ENCODE measurements at regions of chr7 and their contacts with region 1.

Region 1: GRCh38 chr7:158976849-158977593 is 120.7 kb downstream of the DYNC2I1 start:
- DNase-seq: peak; percentile 85
- H3K4me3 Mint-ChIP-seq: peak overlapping the region; percentile 60
- H3K27ac Mint-ChIP-seq: peak overlapping the region; percentile 44
- H3K4me1 Mint-ChIP-seq: peaks cover 7% of the 10 kb centered on the region
- H3K27me3 Mint-ChIP-seq: no peaks in the 10 kb centered on the region
- CTCF ChIP-seq: peak; percentile 92

Region 2: DNA sequence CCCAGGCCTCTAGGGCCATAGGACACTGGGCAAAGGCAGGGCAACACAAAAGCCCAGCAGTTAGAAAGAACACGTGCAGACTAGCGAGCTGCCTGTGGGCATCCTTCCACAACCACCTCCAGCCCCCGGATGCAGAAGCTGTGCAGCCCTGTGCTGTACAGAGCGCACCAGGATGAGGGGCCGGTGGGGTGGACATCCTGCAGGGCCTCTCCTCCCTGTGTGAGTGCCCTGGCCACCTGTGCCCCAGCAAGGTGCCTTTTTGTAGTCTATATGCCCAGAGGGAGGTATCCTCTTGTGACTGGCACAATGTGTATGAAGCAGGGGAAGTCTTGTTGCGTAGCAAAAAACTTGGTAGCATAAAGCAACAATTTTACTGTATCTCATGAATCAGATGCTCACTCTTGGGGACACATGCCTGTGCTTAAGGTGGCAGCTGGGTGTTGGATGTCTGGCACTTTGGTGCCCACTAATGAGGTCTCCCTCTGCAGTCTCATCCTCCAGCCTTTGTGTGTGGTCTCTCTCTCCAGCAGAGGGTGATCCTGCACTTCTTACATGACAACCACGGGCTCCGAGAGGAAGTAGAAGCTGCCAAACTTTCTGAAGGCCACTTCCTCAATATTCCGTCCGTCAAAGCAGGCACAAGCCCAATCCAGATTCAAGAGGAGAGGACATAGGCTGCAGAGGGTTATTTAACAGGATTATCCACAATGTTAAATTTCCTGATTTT is 281.1 kb before region 1 on chr7:
- CTCF ChIA-PET with region 1: interaction called, 5 read pairs
- POLR2A ChIA-PET with region 1: no interaction called
- intact Hi-C with region 1: loop called (anchors 1 kb)
- DNase-seq: peak; percentile 71
- H3K4me3 Mint-ChIP-seq: no peak overlapping the region
- H3K27ac Mint-ChIP-seq: no peak overlapping the region
- H3K4me1 Mint-ChIP-seq: peaks cover 9% of the 10 kb centered on the region
- H3K27me3 Mint-ChIP-seq: no peaks in the 10 kb centered on the region
- CTCF ChIP-seq: peak; percentile 31

Region 3: DNA sequence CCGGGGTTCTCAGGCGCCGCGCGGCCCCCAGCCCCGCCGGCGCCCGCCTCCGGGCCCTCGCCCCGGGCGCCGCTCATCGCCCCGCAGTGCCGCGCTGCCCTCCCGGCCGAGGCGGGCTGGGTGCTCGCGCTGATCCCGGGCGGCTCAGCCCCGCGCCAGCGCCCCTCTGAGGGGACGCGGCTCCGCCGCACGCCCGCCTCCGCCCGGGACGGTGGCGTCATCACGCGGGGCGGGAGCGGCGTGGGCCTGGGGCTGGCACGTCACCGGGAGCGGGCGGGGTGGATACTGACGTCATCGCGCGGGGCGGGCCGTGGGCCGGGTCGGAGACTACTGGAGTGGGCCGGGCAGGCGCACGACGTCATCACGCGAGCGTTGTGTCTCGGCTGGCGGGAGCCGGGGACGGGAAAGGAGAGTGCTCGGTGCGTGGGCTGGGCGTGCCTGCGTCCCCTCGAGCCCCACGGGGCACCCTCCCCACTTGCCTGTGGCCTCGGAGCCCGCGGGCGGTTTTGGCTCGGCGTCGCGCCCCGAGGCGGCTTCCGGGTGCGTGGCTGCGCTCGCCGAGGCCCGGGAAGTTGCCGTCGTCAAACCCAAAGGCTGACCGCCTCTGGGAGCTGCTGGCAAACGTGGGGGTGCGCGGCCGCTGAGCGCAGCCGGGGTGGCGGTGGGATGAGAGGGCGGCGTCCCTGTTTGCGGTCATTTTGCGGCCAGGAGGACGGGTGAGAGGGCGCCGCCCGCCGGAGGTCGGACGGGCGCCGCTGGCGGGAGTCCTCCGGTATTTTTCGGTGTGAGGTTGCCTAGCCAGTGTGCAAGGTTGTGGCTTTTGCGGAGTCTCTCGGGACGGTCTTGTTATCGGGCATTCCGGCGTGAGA is 147.4 kb before region 1 on chr7 and contains the start of gene ESYT2:
- CTCF ChIA-PET with region 1: no interaction called
- POLR2A ChIA-PET with region 1: interaction called, 3 read pairs
- intact Hi-C with region 1: loop called (anchors 2 kb)
- DNase-seq: peak; percentile 94
- H3K4me3 Mint-ChIP-seq: peak within 1 kb of the TSS; percentile 87
- H3K27ac Mint-ChIP-seq: peak within 1 kb of the TSS; percentile 81
- H3K4me1 Mint-ChIP-seq: peaks cover 15% of the 10 kb centered on the region
- H3K27me3 Mint-ChIP-seq: no peaks in the 10 kb centered on the region
- CTCF ChIP-seq: no peak
- total RNA-seq, gene ESYT2: 74.1 and 78.6 TPM in 2 replicates

Region 4: DNA sequence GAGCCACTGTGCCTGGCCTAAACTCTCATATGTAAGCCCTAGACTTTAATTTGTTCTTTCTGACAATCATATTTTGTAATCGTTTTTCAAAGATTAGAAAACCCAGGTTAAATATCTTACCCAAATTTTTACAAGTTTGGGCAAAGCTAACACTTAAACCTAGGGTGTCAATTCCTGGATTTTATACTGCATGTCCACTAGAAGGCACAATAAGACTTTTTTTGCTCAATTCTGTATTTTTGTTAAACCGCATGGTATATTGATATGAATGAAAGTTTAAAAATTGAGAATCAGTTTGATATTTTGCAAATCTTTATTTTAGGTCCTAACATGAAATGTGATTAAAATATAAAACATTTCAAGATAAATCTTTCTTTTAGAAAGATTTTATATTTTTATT is 91.4 kb before region 1 on chr7:
- CTCF ChIA-PET with region 1: interaction called, 17 read pairs
- POLR2A ChIA-PET with region 1: no interaction called
- intact Hi-C with region 1: loop called (anchors 5 kb)
- DNase-seq: peak; percentile 14
- H3K4me3 Mint-ChIP-seq: no peak overlapping the region
- H3K27ac Mint-ChIP-seq: no peak overlapping the region
- H3K4me1 Mint-ChIP-seq: no peaks in the 10 kb centered on the region
- H3K27me3 Mint-ChIP-seq: no peaks in the 10 kb centered on the region
- CTCF ChIP-seq: peak; percentile 37

Region 5: DNA sequence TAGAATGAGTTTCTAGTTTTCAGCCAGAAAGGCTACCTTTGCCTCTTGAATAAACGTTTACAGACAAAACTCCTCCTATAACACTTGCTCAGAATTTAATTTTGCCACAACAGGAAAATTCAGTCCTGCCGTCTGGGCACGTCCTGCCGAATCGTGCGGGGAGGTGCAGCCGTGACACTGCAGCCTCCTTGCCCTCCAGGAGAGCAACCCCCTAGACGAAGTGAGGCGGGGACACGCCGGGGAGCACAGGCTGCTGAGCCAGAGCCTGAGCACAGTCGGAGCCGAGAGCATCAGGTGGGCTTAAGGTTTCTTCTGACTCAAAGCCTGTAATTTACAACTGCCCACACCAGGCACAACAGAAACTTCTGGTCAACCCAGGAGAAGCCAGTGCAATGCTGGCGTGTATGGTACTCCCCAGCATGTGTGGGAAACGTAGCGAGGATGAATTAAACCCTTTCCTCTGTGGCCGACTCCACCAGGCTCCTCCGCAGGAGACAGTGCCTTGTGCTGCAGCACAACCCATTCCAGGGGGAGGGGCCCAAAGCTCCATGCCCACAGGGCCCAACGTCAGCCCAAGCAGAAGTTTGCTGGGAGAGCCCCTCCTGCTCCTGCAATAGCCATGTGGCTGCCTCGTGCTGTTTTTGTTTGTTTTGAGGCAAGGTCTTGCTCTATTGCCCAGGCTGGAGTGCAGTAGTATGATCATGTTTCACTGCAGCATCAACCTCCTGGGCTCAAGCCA is 18.2 kb before region 1 on chr7:
- CTCF ChIA-PET with region 1: interaction called, 22 read pairs
- POLR2A ChIA-PET with region 1: interaction called, 3 read pairs
- intact Hi-C with region 1: no loop called
- DNase-seq: no peak
- H3K4me3 Mint-ChIP-seq: peak overlapping the region; percentile 69
- H3K27ac Mint-ChIP-seq: no peak overlapping the region
- H3K4me1 Mint-ChIP-seq: peaks cover 9% of the 10 kb centered on the region
- H3K27me3 Mint-ChIP-seq: peaks cover 8% of the 10 kb centered on the region
- CTCF ChIP-seq: no peak

Region 6: GRCh38 chr7:158991824-158992583 is 15.0 kb after region 1 on chr7:
- CTCF ChIA-PET with region 1: interaction called, 15 read pairs
- POLR2A ChIA-PET with region 1: no interaction called
- intact Hi-C with region 1: no loop called
- DNase-seq: no peak
- H3K4me3 Mint-ChIP-seq: no peak overlapping the region
- H3K27ac Mint-ChIP-seq: no peak overlapping the region
- H3K4me1 Mint-ChIP-seq: no peaks in the 10 kb centered on the region
- H3K27me3 Mint-ChIP-seq: no peaks in the 10 kb centered on the region
- CTCF ChIP-seq: no peak